Calu3 (cell line): ENCODE measurements at regions of chr5 and their contacts with region 1.

Region 1: GRCh38 chr5:177113566-177114424 is 19.8 kb upstream of the NSD1 start:
- DNase-seq: peak; percentile 85
- H3K4me3 Mint-ChIP-seq: no peak overlapping the region
- H3K27ac Mint-ChIP-seq: no peak overlapping the region
- H3K4me1 Mint-ChIP-seq: peaks cover 20% of the 10 kb centered on the region
- H3K27me3 Mint-ChIP-seq: no peaks in the 10 kb centered on the region
- CTCF ChIP-seq: peak; percentile 98

Region 2: GRCh38 chr5:177071666-177072385 is 42.0 kb before region 1 on chr5:
- CTCF ChIA-PET with region 1: interaction called, 57 read pairs
- intact Hi-C with region 1: loop called (anchors 1 kb)
- DNase-seq: peak; percentile 87
- H3K4me3 Mint-ChIP-seq: no peak overlapping the region
- H3K27ac Mint-ChIP-seq: no peak overlapping the region
- H3K4me1 Mint-ChIP-seq: peaks cover 11% of the 10 kb centered on the region
- H3K27me3 Mint-ChIP-seq: no peaks in the 10 kb centered on the region
- CTCF ChIP-seq: peak; percentile 79

Region 3: DNA sequence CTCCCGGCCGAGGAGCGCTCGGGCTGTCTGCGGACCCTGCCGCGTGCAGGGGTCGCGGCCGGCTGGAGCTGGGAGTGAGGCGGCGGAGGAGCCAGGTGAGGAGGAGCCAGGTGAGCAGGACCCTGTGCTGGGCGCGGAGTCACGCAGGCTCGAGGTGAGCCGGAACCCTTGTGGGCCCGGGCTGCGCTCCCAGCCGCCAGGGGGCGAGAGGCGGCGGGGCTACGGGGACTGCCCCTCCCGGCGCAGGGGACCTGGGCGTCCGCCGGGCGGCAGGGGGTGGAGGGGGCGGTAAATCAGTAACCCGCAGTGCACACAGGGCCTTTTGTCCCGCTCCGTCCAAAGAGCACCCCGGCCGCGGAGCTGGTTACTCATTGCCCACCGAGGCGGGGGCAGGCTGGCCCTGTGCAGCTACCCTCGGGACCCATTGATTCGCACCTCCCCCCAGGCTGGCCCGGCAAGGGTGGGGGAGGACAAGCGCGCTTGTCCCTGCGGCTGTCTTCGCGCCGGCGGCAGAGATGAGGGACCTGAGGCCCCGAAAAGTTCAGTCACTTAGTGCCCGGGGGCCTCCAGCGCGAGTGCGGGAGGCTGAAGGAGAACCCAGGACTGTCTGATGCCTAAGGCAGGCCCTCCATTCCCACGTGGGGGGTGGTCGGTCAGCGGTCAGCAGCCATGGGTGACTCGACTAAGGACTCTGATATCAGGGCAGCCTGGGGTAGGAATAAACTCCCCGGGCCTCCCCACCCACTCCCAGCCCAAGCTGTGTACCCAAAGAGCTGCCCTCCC is 26.7 kb before region 1 on chr5:
- CTCF ChIA-PET with region 1: interaction called, 73 read pairs
- intact Hi-C with region 1: no loop called
- DNase-seq: peak; percentile 99
- H3K4me3 Mint-ChIP-seq: peak overlapping the region; percentile 96
- H3K27ac Mint-ChIP-seq: peak overlapping the region; percentile 90
- H3K4me1 Mint-ChIP-seq: peaks cover 42% of the 10 kb centered on the region
- H3K27me3 Mint-ChIP-seq: no peaks in the 10 kb centered on the region
- CTCF ChIP-seq: peak; percentile 98

Region 4: GRCh38 chr5:177303121-177303924 is 189.5 kb after region 1 on chr5 and contains the starts of genes PRELID1 and RAB24:
- CTCF ChIA-PET with region 1: interaction called, 7 read pairs
- intact Hi-C with region 1: loop called (anchors 5 kb)
- DNase-seq: peak; percentile 96
- H3K4me3 Mint-ChIP-seq: peak within 1 kb of the TSS; percentile 94
- H3K27ac Mint-ChIP-seq: peak within 1 kb of the TSS; percentile 89
- H3K4me1 Mint-ChIP-seq: peaks cover 60% of the 10 kb centered on the region
- H3K27me3 Mint-ChIP-seq: no peaks in the 10 kb centered on the region
- CTCF ChIP-seq: peak; percentile 74
- total RNA-seq, gene PRELID1: 215 and 217 TPM in 2 replicates
- total RNA-seq, gene RAB24: 34.0 and 41.1 TPM in 2 replicates

Region 5: GRCh38 chr5:177454397-177455035 is 340.7 kb after region 1 on chr5:
- CTCF ChIA-PET with region 1: no interaction called
- intact Hi-C with region 1: loop called (anchors 10 kb)
- DNase-seq: peak; percentile 99
- H3K4me3 Mint-ChIP-seq: peak overlapping the region; percentile 77
- H3K27ac Mint-ChIP-seq: peak overlapping the region; percentile 86
- H3K4me1 Mint-ChIP-seq: peaks cover 40% of the 10 kb centered on the region
- H3K27me3 Mint-ChIP-seq: no peaks in the 10 kb centered on the region
- CTCF ChIP-seq: peak; percentile 96

Region 6: DNA sequence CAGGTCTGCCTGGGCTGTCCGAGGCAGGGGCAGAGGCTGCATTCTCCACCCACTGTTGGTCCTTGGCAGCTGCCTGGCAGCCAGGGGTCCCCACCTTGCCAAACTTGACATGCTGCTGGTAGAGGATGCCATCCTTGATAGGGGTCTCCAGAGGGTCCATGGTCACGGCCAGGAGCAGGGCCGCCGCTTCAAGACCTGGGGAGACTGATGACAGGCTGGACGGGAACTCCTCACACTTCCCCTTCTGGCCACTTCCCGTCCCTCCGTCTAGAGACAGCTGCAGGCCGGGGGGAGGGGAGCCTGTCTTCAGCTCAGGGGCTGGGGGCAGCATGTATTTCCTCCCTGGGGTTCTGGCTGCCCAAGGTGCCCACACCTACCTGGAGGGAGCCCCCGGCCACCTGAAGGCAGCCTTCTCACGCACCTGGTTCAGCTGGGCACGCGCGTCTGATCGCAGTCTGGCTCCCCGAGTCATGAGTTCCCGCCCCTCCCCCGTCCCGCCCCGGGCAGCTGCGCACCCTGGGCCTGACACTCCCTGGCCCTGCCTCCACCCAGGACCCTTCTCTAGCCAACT is 395.7 kb after region 1 on chr5 and contains the start of gene DOK3:
- CTCF ChIA-PET with region 1: no interaction called
- intact Hi-C with region 1: no loop called
- DNase-seq: no peak
- H3K4me3 Mint-ChIP-seq: no peak within 1 kb of the TSS
- H3K27ac Mint-ChIP-seq: no peak within 1 kb of the TSS
- H3K4me1 Mint-ChIP-seq: no peaks in the 10 kb centered on the region
- H3K27me3 Mint-ChIP-seq: no peaks in the 10 kb centered on the region
- CTCF ChIP-seq: no peak
- total RNA-seq, gene DOK3: 14.5 and 15.7 TPM in 2 replicates